HepG2 (cell line): ENCODE measurements at regions of chr4 and their contacts with region 1.

Region 1: DNA sequence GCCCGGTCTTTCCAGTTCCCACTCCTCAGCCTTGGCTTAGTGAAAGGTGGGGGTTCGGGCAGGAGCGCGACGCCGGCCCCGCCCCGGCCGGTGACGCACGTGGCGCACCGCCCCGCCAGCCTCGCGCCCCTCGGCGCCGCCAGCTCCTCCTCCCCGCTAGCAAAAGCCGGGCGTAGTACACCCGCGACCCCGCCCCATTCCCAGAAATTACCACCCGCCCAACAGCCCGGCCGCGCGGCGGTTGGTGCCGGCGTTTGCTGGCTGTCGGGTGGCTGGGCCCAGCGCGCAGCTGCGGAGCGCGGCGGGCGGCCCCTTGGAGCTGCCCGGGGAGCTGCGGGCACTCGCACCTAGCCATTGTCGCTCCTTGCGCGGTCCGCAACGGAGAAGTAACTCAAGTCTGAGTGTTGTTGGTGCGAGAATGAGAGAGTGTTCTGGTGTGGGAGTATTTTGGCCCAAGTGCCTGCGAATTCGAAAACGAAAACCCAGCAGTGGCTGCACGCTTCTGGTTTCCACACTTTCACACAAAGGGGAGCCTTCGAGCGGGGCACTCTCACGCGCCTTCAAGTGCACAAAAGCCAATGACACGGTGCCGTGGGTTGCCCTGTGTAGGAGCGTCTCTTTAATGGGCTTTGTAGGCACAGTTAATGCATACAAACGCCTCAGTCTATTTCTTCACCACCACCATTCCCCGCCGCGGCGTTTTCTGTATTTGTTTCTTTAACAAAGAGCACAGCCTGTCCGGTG is 1.0 kb upstream of the ELF2 start:
- DNase-seq: peak; percentile 86
- ATAC-seq: peak; percentile 81
- H3K4me3 ChIP-seq: peak overlapping the region; percentile 70 to 97 (median 77)
- H3K27ac ChIP-seq: peak overlapping the region; percentile 97
- H3K4me1 ChIP-seq: peaks cover 36% of the 10 kb centered on the region
- H3K27me3 ChIP-seq: no peaks in the 10 kb centered on the region
- CTCF ChIP-seq: peak; percentile 12; the same call in 1 of the 2 replicates
- EP300 ChIP-seq: no peak; a peak in 1 of 4 replicates
- POLR2A ChIP-seq: peak; percentile 80 to 90
- RAD21 ChIP-seq: no peak

Region 2: GRCh38 chr4:139030614-139031235 is 147.3 kb before region 1 on chr4:
- CTCF ChIA-PET with region 1: no interaction called
- POLR2A ChIA-PET with region 1: no interaction called
- in situ Hi-C with region 1: no loop called
- intact Hi-C with region 1: loop called (anchors 2 kb)
- DNase-seq: peak; percentile 67
- ATAC-seq: peak; percentile 67
- H3K4me3 ChIP-seq: no peak overlapping the region
- H3K27ac ChIP-seq: no peak overlapping the region
- H3K4me1 ChIP-seq: 0 out of 2 replicates have a peak, but pooled peaks cover 13% of the 10 kb centered on the region
- H3K27me3 ChIP-seq: no peaks in the 10 kb centered on the region
- CTCF ChIP-seq: peak; percentile 91
- EP300 ChIP-seq: no peak
- POLR2A ChIP-seq: no peak
- RAD21 ChIP-seq: peak; percentile 62

Region 3: DNA sequence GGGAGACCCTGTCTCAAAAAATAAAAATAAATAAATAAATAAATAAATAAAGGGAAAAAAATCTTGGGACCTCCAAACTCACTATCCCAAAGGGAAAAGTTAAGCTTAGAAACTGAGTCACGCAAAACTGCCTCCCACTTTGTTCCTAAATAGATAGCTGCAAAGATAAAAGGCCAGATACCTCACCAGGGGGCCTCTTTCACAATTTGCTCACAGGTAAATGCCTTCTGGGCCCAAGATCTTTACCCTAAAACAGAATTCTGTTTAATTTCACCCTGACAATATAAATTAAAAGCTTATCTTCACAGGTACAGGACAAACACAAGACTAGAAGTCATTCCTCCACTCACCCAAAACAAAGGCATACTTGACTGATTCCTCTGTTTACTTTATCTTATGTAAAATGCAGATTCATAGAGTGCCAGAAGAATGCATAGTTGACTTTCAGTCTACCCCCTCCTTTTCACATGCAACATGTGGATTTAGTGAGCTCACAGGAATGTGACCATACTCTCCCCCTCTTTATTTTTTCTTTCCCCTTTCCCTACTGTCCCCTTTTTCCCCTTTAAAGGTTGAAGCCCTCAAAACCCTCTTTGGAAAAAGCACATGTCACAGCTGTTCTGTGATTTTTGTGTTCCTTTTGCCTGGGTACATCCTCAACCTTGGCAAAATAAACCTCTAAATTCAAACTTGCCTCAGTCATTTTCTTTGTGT is 24.5 kb before region 1 on chr4:
- CTCF ChIA-PET with region 1: no interaction called
- POLR2A ChIA-PET with region 1: interaction called, 21 read pairs
- in situ Hi-C with region 1: no loop called
- intact Hi-C with region 1: no loop called
- DNase-seq: peak; percentile 86
- ATAC-seq: peak; percentile 97
- H3K4me3 ChIP-seq: no peak overlapping the region
- H3K27ac ChIP-seq: peak overlapping the region; percentile 50
- H3K4me1 ChIP-seq: peaks cover 26% of the 10 kb centered on the region
- H3K27me3 ChIP-seq: no peaks in the 10 kb centered on the region
- CTCF ChIP-seq: no peak
- EP300 ChIP-seq: no peak
- POLR2A ChIP-seq: no peak
- RAD21 ChIP-seq: no peak

Region 4: DNA sequence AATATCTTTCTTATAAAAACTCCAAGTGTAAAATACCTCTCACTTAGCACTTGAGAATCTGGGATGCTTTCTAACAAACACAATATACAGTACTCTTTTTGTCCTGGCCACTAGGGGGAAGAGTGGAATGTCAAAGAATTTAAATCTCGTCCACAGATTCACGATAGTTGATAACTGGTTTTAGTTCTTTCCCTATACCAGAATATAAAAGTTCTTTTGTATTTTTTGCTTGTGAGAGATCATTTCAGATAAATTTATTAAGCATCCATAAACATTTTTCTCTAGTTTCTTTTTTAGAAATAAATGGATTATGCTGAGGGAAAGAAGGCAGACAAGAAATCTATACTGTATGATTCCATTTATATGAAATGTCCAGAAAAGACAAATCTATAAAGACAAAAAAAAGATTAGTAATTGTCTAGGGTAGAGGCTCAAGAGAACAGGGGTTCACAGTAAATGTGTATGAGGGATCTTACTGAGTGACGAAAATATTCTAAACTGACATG is 51.5 kb after region 1 on chr4:
- CTCF ChIA-PET with region 1: no interaction called
- POLR2A ChIA-PET with region 1: no interaction called
- in situ Hi-C with region 1: no loop called
- intact Hi-C with region 1: loop called (anchors 5 kb)
- DNase-seq: peak; percentile 50
- ATAC-seq: peak; percentile 76
- H3K4me3 ChIP-seq: no peak overlapping the region
- H3K27ac ChIP-seq: no peak overlapping the region
- H3K4me1 ChIP-seq: peaks cover 14% of the 10 kb centered on the region
- H3K27me3 ChIP-seq: no peaks in the 10 kb centered on the region
- CTCF ChIP-seq: peak; percentile 69
- EP300 ChIP-seq: no peak
- POLR2A ChIP-seq: no peak
- RAD21 ChIP-seq: no peak

Region 5: DNA sequence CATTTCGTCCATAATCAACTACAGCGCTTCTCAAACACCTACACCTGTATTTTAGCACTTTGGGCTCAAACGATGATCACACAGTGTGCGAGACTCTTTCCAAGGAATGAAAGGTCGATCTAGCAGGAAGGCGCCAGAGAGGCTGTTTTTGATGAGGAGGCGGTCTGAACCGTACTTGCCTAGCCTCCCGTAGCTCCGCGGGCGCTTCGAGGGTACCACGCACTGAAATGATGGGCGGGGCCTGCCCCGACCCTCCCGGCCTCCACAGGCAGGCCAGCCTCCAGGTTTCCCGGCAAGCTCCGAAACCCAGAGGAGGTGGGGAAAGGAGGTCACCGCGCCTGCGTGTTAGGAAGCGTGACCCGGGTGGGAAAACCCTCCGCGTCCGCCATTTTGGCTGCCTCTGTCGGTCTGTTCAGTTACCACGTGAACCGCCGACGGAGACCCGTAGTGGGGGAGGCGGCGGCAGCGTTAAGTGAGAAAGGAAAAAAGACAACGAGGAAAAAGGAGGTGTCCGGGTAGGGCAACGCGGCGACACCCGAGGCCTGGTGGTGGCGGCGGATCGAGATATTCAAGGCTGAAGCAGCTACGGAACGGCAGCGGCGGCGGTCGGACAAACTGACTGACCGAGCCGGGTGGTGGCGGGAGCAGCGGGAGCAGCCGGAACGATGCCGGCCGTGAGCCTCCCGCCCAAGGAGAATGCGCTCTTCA is 123.2 kb after region 1 on chr4 and contains the start of gene NAA15:
- CTCF ChIA-PET with region 1: no interaction called
- POLR2A ChIA-PET with region 1: interaction called, 37 read pairs
- in situ Hi-C with region 1: loop called (anchors 5 kb)
- intact Hi-C with region 1: loop called (anchors 2 kb)
- DNase-seq: peak; percentile 96
- ATAC-seq: peak; percentile 95
- H3K4me3 ChIP-seq: peak within 1 kb of the TSS; percentile 91 to 98 (median 94)
- H3K27ac ChIP-seq: peak within 1 kb of the TSS; percentile 86
- H3K4me1 ChIP-seq: peaks cover 69% of the 10 kb centered on the region
- H3K27me3 ChIP-seq: no peaks in the 10 kb centered on the region; a peak in 1 of 5 replicates
- CTCF ChIP-seq: peak; percentile 29; the same call in 1 of the 2 replicates
- EP300 ChIP-seq: peak; percentile 34 to 41; a peak in 1 of 4 replicates
- POLR2A ChIP-seq: peak; percentile 77 to 93
- RAD21 ChIP-seq: no peak
- total RNA-seq, gene NAA15: 50.2 and 81.2 TPM in 2 replicates